ENCODE measurements at regions of chr4 and their contacts with region 1.

Region 1: DNA sequence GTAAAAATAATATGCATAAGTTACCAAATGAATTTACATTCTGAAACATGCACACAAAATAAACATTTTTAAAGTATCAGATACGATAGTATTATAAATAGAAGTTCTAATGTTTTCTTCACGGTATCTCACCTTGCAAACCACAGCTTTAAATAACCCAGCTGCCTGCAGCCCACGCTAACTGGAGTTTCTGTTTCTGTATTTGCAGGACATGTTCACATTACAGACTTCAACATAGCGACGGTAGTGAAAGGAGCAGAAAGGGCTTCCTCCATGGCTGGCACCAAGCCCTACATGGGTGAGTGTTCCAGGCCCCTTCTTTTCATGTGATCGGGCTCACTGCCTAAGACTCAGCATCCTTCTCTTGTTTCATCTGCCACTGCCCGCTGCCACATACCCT is 291.7 kb downstream of the EVC2 start:
- DNase-seq: no peak
- H3K4me3 ChIP-seq: no peak overlapping the region
- H3K27ac ChIP-seq: no peak overlapping the region
- H3K4me1 ChIP-seq: no peaks in the 10 kb centered on the region
- H3K27me3 ChIP-seq: no peaks in the 10 kb centered on the region
- CTCF ChIP-seq: no peak

Region 2: DNA sequence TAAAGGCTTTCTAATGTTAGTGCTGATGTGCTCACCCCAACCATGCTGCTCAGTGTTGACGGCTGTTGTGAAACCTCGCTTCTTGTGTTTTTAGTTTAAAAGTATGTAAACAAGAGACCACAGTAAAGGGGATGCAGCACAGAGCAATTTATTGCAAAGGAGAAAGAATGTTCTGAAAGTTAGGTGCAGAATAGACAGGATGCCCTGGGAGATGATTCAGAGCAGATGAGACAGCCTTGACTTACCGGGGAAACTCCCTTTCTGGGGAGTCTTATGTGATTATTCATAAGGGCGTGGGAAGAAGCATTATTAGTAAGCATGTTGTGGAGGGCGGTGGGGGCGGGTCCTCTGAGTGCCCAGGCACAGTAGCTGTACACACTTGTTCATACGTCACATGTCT is 342.1 kb after region 1 on chr4:
- intact Hi-C with region 1: loop called (anchors 5 kb)
- DNase-seq: no peak
- H3K4me3 ChIP-seq: no peak overlapping the region
- H3K27ac ChIP-seq: no peak overlapping the region
- H3K4me1 ChIP-seq: no peaks in the 10 kb centered on the region
- H3K27me3 ChIP-seq: no peaks in the 10 kb centered on the region
- CTCF ChIP-seq: no peak

Measured in tibial artery (tissue), 4 donors.